ENCODE measurements at regions of chr22 and their contacts with region 1.

Region 1: DNA sequence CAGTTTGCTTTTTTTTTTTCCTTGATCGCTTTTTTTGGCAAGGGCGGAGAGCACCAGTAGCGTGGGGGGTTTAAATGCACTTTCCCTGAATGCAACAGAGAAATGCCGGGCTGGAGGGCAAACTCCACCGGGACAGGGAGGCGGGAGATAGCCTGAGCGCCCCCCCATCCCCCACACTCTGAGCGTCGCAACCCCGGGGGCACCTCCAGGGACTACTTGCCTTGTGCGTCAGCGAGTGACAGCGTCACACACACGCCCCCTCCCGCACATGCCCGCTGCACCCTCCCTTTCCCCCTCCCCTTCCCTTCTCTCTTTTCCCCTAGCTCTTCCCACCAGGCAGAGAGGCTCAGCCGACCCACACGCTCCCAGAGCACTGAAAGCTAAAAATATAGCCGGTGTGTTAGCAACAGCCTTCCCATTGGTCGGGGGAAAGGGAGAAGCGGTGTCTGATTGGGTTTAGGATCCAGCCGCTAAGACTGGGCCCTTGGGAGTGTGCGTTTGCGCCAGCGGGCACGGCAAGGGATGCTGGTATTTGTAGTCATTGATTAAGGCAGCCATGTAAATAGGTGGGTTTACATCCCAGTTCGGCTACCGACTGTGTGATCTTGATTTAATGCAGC is 1.7 kb upstream of the TOB2 start:
- DNase-seq: peak; percentile 91 to 98
- H3K4me3 ChIP-seq: peak overlapping the region; percentile 94 to 98
- H3K27ac ChIP-seq: peak overlapping the region; percentile 99 to 100
- H3K4me1 ChIP-seq: peaks cover 7 to 9% of the 10 kb centered on the region in 2 donors
- H3K27me3 ChIP-seq: no peaks in the 10 kb centered on the region
- CTCF ChIP-seq: no peak

Region 2: DNA sequence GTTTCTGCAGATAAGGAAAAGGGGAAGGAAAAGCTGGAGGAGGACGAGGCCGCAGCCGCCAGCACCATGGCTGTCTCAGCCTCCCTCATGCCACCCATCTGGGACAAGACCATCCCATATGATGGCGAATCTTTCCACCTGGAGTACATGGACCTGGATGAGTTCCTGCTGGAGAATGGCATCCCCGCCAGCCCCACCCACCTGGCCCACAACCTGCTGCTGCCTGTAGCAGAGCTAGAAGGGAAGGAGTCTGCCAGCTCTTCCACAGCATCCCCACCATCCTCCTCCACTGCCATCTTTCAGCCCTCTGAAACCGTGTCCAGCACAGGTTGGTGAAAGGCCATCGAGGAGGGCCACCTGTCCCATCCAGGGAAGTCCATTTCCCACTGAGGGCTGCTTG is 61.0 kb before region 1 on chr22:
- intact Hi-C with region 1: no loop called
- DNase-seq: no peak
- H3K4me3 ChIP-seq: no peak overlapping the region
- H3K27ac ChIP-seq: no peak overlapping the region
- H3K4me1 ChIP-seq: peaks cover 0 to 11% of the 10 kb centered on the region in 2 donors
- H3K27me3 ChIP-seq: no peaks in the 10 kb centered on the region
- CTCF ChIP-seq: no peak

Region 3: DNA sequence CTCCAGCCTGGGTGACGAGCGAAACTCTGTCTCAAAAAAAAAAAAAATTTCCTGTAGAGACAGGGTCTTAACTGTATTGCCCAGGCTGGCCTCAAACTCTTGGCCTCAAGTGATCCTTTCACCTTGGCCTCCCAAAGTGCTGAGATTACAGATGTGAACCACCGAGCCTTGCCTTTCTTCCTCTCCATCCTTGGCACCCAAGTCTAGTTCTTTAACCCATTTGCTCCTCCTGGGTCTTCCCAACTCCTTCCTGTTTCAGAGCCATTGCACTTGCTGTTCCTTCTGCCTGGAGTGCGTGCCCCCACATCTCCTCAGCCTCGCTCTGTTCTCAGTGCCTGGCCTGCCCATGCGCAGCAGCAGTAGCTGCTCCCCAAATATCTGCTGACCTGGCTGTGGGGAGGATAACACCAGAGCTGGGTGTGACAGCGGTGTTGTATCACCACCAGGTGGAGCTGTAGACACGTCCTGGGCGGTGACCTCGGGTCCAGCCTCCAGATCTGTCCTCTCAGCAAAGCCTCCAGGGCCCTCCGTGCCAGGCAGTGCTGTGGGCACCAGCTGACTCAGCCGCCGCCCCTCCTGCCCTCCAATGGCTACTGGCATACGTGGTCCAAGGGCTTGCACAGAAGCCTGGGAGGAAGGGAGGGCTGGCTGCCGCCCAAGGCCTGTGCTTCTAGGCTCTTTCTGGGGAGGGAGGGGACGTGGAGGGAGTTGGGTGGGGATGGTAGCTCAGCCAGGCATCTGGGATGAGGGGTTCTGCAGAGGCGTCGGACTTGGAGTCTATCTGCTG is 44.6 kb before region 1 on chr22:
- intact Hi-C with region 1: loop called (anchors 1 kb)
- DNase-seq: peak; percentile 95 to 99
- H3K4me3 ChIP-seq: no peak overlapping the region
- H3K27ac ChIP-seq: peak overlapping the region; percentile 43 to 61
- H3K4me1 ChIP-seq: peaks cover 0 to 10% of the 10 kb centered on the region in 2 donors
- H3K27me3 ChIP-seq: no peaks in the 10 kb centered on the region
- CTCF ChIP-seq: peak; percentile 95 to 99 (median 98)

Region 4: DNA sequence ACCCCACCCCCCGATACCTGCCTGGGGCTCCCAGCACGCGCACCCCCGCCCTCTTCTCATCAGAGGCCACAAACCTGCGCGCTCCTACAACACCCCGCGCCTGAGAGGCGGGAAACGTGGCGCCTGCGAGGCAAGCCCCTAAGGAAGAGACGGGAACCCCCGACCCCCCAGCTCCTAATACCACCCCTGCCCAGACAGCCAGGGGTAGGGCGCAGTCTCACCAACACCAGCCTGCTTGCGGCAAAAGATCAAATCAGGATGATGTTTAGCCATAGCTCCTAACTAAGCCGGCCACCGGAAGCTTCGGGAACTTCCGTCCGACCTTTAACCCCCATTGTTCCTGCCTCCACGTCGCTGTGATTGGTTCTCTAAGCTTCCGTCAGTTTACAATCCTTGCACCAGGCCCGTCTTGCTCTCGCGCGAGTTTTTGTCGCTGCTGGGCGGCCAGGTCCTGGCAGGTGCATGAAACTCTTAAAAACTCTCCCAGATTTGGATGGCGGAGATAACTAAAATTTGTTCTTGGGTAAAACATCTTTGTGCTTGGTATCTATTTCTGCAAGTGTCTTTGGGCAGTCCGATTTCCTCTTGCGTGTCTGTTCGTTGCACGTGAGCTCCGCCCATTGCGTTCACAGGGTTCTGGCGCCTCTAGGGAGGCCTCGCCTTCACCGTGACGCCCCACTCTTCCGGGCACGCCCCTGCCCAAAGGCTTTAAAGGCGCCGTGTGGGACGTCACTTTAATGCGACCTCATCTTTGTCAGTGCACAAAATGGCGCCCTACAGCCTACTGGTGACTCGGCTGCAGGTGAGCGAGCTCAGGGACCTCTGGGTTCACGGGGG is 20.3 kb after region 1 on chr22 and contains the starts of genes ACO2 and PHF5A:
- intact Hi-C with region 1: loop called (anchors 1 kb)
- DNase-seq: peak; percentile 87 to 98
- H3K4me3 ChIP-seq: peak within 1 kb of the TSS; percentile 94 to 97
- H3K27ac ChIP-seq: peak within 1 kb of the TSS; percentile 93 to 96
- H3K4me1 ChIP-seq: peaks cover 3 to 17% of the 10 kb centered on the region in 2 donors
- H3K27me3 ChIP-seq: no peaks in the 10 kb centered on the region
- CTCF ChIP-seq: no peak
- total RNA-seq, gene ACO2: 81.1 TPM
- total RNA-seq, gene PHF5A: 4.8 TPM

Region 5: GRCh38 chr22:41504397-41504796 is 56.1 kb after region 1 on chr22:
- intact Hi-C with region 1: loop called (anchors 2 kb)
- DNase-seq: peak; percentile 51 to 89
- H3K4me3 ChIP-seq: no peak overlapping the region
- H3K27ac ChIP-seq: peak overlapping the region; percentile 56 to 85
- H3K4me1 ChIP-seq: peaks cover 16 to 30% of the 10 kb centered on the region in 2 donors
- H3K27me3 ChIP-seq: no peaks in the 10 kb centered on the region
- CTCF ChIP-seq: no peak

Region 6: DNA sequence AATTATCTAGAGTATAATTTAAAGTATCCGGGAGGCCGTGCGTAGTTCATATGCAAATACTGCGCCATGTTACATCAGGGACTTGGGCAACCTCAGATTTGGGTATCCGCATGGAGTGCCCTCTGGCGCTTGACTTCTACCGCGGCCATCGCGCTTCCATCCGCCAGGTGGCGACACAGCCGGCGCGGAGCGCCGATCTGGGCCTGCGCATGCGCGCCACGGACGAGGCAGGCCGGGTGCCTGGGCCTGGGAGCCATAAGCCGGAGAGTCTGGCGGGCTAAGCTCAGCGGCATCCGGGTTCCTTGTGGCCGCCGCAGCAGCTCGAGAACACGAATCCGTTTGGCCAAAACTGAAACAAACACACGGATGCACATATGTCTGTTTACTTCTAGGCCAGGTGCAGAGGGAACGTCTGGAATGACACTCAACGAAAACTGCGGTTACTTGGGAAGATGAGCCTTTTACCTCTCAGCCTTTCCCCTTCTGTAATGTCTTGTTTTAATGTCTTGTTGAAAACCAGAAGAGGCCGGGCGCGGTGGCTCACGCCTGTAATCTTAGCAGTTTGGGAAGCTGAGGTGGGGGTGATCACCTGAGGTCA is 218.5 kb after region 1 on chr22:
- intact Hi-C with region 1: no loop called
- DNase-seq: peak; percentile 59 to 94
- H3K4me3 ChIP-seq: peak overlapping the region in 1 of 2 donors; percentile 51
- H3K27ac ChIP-seq: peak overlapping the region; percentile 72 to 84
- H3K4me1 ChIP-seq: peaks cover 0 to 4% of the 10 kb centered on the region in 2 donors
- H3K27me3 ChIP-seq: no peaks in the 10 kb centered on the region
- CTCF ChIP-seq: peak; percentile 97 to 98 (median 97)

Measured in ascending aorta (tissue), 2 donors.